AG04449 (cell line): ENCODE measurements at regions of chr17 and their contacts with region 1.

Region 1: DNA sequence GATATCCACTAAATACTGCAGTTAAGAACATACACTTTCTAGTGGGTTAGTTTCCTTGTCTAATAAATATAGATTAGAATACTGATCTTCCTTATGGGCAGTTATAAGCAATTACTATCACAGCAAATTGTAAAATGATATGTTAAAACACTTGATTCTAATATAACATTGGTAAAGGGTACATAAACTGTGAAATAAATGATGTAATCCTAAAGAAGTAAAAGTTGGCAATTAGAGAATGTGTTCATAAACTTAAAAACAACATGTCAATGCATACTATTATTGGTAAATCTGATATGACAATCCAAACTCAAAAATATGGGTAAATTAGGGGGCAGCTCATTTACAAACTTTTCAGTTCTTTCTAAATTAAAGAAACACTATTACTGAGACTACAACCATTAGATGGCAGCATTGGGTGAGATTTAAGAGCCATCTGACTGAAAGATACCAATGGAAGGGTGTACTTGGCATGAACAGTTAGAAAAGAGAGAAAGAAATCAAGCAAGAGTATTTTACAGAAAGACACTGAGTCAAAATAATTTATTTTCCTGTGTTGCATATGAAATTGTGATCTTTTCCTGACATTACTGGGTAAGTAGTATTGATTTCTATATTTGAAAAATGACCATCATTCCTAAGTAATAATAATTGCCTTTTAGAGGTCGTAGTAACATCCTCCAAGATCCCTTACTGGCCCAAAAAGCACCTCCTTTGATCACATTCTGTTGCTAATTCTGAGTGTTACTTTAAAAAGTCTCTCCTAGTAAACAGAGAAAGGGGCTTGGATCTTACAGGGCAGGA is 119.6 kb downstream of the SPAG9 start:
- DNase-seq: no peak
- H3K4me3 ChIP-seq: no peak overlapping the region
- CTCF ChIP-seq: no peak

Region 2: GRCh38 chr17:50908860-50909764 is 91.9 kb before region 1 on chr17:
- CTCF ChIA-PET with region 1: no interaction called
- POLR2A ChIA-PET with region 1: no interaction called
- DNase-seq: no peak
- H3K4me3 ChIP-seq: no peak overlapping the region
- CTCF ChIP-seq: no peak

Region 3: GRCh38 chr17:50976951-50977472 is 24.0 kb before region 1 on chr17:
- CTCF ChIA-PET with region 1: interaction called, 11 read pairs
- POLR2A ChIA-PET with region 1: no interaction called
- DNase-seq: no peak
- H3K4me3 ChIP-seq: no peak overlapping the region
- CTCF ChIP-seq: no peak

Region 4: GRCh38 chr17:51015145-51015558 is 14.1 kb after region 1 on chr17:
- CTCF ChIA-PET with region 1: interaction called, 30 read pairs
- POLR2A ChIA-PET with region 1: no interaction called
- DNase-seq: no peak
- H3K4me3 ChIP-seq: no peak overlapping the region
- CTCF ChIP-seq: no peak

Region 5: GRCh38 chr17:51035431-51035830 is 34.4 kb after region 1 on chr17:
- CTCF ChIA-PET with region 1: interaction called, 30 read pairs
- POLR2A ChIA-PET with region 1: no interaction called
- DNase-seq: peak; percentile 92
- H3K4me3 ChIP-seq: no peak overlapping the region
- CTCF ChIP-seq: no peak

Region 6: DNA sequence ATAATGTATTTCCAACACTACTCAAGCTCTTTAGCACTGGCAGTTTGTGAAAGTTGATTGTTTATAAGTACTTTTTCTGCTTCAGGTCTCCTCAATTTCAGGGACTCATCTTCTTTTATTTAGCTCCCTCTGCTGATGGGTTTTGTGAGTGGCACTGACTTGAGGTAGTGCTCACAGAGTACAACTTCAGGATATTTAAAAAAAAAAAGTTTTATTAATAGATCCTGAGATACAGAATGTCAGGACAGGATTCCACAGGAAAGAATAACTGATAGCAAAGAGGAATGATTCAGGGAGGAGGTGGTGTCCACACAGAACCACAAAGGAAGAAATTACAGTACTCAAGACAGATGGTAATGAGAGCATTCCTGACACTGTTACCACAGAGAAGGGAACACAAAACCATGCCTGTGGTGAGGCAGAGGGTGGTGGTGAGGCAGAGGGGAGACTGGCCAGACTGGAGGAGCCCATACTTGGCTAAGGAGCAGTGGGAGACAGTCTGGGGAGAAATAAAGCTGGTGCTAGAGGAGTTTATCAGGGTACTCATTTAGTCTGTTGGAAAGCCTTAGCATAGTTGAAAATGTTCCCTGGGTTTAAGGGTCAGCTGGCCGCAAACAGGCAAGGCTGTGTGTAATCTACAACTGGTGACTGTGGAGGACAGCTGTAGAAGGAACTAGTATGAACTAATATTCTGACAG is 55.9 kb after region 1 on chr17:
- CTCF ChIA-PET with region 1: interaction called, 276 read pairs
- POLR2A ChIA-PET with region 1: interaction called, 3 read pairs
- DNase-seq: peak; percentile 91
- H3K4me3 ChIP-seq: no peak overlapping the region
- CTCF ChIP-seq: peak; percentile 49

Region 7: DNA sequence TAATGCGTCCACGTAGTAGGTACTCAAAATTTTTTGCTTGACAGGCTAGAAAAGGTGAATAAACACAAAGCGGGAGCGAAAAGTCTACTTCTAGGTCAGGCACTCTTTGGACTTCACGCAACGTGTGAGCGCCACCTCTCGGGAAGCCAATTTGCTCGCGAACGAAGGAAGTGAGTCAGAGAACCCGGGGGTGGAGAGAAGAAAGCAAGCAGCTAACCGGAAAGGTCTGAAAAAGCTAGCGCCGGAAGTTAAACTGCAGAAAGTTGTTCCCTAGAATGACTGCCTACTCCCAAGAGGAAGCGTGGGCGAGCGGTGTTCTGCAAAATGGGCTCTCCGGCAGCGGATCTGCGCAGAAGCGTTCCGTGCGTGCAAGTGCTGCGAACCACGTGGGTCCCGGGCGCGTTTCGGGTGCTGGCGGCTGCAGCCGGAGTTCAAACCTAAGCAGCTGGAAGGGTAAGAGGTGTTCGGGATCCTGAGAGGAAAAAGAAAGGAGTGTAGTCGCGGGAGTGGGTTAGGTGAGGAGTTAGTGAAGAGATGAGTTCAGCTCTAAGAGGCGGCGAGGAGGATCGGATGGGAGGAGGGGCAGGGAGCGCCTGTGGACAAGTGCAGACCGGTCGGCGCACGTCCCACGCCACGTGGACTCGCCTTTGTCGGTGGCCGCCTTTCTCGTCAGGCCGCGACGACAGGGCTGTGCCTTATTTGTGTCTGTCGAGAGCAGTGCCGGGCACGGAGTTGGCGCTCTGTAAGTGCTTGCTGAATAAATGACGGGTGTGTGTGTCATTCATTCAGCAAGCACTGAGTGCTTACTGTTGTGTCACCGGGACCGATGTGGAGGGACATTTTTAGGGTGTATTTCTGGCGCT is 152.4 kb after region 1 on chr17 and contains the start of gene NME1:
- CTCF ChIA-PET with region 1: interaction called, 116 read pairs
- POLR2A ChIA-PET with region 1: no interaction called
- DNase-seq: peak; percentile 98
- H3K4me3 ChIP-seq: peak within 1 kb of the TSS; percentile 93
- CTCF ChIP-seq: peak; percentile 81